Right ventricle myocardium inferior (tissue), 1 donor: ENCODE measurements at regions of chr18 and their contacts with region 1.

Region 1: DNA sequence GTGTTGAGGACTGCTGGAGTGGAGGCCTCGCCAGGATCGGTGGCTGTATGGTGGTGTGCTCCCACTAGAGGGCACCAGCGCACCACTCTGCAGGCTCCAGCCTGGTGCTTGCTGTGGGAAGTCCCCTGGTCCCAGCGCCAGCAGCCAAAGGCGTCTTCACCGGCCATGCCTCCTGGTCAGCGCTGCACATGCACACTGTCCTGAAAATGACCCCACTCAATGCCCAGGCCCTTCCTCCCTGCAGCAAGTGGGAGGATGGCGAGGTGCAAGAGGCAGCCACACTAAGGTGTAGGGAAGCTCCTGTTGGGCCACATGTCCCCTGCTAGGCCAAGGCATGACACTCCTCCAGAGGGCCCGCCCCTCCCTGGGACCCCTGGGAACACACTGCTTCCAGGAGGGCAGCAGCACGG is 136.5 kb downstream of the CTIF start:
- DNase-seq: peak; percentile 91
- ATAC-seq: peak; percentile 90

Region 2: DNA sequence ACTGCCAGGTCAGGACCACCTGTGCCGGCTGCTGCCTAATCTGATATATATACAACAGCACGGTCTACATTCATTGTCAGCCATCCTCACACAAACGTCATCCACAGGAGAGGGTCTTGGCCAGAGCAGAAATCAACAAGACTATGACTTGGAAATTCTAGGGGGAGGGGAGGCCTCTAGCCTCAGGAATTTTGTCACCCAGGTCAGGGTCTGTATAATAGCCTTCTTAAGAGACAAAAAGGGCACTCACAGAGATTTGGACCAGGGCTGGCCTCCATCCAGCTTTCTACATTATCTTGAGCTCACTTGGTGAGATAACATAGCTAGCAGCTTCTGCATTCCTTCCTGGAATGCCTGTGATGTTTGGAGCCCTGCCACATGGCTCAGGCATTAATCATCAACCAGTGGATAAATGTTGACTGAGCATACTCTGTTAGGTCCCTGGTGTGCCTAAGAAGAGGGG is 186.9 kb before region 1 on chr18:
- intact Hi-C with region 1: no loop called
- DNase-seq: peak; percentile 72
- ATAC-seq: peak; percentile 90

Region 3: GRCh38 chr18:48777026-48777743 is 101.8 kb after region 1 on chr18:
- intact Hi-C with region 1: loop called (anchors 10 kb)
- DNase-seq: no peak
- ATAC-seq: no peak

Region 4: DNA sequence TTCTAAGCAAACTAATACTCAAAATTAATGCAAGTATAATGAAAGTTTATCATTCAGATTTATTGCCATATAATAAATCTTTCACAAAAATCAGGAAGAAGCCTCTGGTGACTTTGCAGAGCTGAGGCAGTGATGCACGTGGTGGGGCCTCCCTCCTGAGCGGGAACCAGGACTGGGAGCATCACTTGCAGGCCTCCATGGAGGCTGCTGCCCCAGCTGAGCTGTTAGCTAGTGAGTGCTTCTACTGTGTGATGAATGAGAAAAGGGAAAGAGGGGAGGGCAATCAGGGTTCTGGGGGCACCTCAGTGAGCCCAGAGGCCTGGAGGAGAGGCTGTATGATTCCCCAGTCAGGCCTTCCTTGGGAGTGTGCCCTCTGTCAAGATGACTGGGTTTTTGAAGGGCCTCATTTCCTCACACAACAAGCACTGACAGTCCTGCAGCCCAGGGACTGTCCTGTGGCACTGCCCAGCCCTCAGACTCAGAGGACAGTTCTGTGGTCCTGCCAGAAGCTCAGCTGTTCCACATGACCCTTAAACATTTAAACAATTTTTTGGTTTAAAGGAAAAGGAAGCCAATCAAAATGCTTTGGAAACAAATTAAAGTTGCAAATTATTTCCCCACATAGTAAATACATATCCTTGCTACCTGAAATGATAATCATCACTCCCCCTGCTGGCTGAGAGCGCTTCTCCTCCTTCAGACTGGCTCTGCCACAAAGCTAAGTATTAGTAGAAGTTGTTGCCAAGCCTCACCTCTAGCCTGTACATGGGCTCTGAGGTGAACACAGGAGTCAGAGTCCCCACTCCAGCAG is 366.3 kb after region 1 on chr18:
- intact Hi-C with region 1: loop called (anchors 5 kb)
- DNase-seq: no peak
- ATAC-seq: peak; percentile 75

Region 5: DNA sequence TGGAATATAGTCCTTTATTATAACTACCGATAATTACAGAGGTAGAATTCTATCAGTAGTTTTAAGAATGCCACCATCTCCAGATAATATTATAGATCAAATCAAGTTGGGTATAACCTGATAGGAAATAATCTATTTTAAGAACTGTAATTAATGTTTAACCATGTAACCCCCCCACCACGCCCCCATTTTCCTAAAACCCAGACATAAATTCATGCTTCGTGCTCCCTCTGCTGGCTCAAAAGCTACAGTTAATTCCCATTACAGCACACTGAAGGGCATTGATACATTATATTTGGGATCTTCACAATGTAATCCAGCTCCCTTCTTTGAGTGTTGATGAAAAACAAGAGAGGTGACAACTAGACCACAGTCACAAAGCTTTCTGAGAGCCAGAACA is 503.4 kb after region 1 on chr18:
- intact Hi-C with region 1: loop called (anchors 2 kb)
- DNase-seq: no peak
- ATAC-seq: no peak

Region 6: GRCh38 chr18:49238433-49239042 is 563.2 kb after region 1 on chr18:
- intact Hi-C with region 1: loop called (anchors 2 kb)
- DNase-seq: no peak
- ATAC-seq: no peak

Region 7: DNA sequence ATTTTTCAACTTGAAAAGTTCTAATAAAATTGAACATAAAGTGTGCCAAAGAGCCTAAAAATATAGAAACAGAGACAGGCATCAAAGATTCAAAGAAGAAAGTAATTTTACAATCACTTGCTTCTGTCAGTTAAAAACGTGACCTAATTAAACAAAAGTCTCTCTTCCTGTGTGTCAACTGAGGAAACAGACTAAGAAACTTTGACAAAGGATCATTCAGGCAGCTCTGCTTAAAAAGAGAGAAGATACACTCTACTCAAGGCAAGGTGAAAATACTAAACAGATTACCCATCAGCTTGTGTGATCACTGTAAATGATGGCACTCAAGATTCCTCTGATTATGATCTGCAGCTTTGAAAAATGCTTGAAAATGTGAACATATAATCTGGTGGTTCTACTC is 737.3 kb after region 1 on chr18:
- intact Hi-C with region 1: loop called (anchors 10 kb)
- DNase-seq: no peak
- ATAC-seq: no peak

Region 8: DNA sequence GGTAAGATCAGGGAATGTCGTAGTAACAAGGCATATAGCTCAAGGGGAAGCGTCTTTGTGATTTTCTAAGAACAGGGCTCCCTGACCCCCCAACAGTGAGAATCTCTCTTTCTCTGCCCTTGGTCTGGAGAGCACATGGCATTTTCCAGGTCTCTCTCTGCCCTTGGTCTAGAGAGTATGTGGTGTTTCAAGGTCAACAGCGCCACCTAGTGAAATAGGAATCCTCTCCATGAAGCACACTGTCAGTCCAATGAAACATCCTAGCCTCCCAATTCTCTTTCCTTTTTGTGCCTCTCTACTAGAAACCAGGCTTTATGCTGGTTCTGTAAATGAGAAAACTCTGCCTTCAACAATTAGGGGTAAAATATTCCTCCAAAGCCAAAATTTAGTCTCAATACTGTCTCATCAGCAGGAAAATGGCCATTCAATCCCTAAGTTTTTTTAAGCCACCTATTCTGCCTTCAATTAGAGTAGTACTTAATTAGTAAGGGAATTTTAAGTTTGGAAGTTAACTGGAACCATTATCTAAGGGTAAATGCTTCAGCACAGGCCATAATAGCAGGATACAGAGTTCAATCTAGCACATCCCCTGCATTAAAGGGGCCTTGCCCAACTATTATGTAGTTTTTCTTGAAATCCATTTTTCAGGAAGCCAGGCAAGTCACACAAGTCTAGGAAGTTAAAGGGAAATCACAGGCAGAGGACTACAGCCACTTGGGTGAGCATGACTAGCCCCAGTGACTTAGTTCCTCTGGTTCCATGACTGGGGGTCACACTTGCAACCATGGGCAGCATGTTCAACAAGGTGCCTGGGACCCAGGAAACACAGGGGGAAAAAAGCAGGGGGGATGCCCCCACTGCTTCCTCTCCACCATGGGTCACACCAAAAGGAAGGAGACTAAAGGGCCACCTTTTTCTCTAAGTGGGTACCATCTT is 772.7 kb after region 1 on chr18:
- intact Hi-C with region 1: loop called (anchors 2 kb)
- DNase-seq: no peak
- ATAC-seq: peak; percentile 60